WTC11 (cell line): ENCODE measurements at regions of chr13 and their contacts with region 1.

Region 1: DNA sequence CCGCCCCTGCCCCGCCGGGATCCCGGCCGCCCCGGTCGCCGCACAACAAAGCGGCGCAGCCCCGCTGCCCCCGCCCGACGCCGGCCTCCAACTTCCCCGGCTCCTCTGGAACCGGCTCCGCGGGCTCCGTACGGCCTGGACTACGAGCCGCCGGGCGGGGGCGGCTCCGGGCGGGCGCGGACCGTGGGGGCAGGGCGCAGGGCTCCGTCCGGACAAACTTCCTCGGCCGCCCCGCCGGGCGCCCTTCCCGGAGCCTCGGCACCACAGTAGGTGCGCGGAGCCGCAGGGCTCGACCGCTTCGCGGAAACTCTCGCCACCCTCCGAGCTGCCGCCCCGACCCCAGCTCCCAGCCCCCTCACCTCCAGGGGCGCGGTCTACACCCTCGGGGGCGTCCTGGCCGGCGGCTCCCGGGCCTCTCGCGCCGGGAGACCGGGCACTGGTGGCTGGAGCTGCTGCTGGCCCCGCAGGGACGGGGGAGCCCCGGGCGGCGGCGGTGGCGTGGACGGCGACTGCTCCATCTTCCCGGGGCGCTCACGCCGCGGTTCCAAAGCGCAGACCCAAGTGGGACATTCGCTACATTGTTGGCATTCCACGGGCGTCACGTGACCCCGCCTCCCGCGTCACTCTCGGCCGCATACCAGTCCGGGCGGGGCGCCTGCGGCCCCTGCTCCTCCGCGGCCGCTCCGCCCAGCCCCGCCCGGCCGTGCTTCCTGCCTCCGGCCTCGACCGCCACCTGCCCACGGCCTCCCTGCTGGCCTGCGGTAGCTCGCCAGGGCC is at the start of gene LATS2:
- DNase-seq: peak; percentile 98
- ATAC-seq: peak; percentile 87
- H3K4me3 Mint-ChIP-seq: peak within 1 kb of the TSS; percentile 77
- H3K27ac Mint-ChIP-seq: peak within 1 kb of the TSS; percentile 94
- H3K4me1 Mint-ChIP-seq: peaks cover 43% of the 10 kb centered on the region
- H3K27me3 Mint-ChIP-seq: no peaks in the 10 kb centered on the region
- CTCF ChIP-seq: no peak
- total RNA-seq, gene LATS2: 27.5 to 31.2 TPM (median 28.9 TPM) in 3 replicates

Region 2: GRCh38 chr13:20891768-20892167 is 169.4 kb before region 1 on chr13:
- CTCF ChIA-PET with region 1: no interaction called
- POLR2A ChIA-PET with region 1: no interaction called
- DNase-seq: no peak
- ATAC-seq: no peak
- H3K4me3 Mint-ChIP-seq: no peak overlapping the region
- H3K27ac Mint-ChIP-seq: no peak overlapping the region
- H3K4me1 Mint-ChIP-seq: no peaks in the 10 kb centered on the region
- H3K27me3 Mint-ChIP-seq: no peaks in the 10 kb centered on the region
- CTCF ChIP-seq: no peak

Region 3: GRCh38 chr13:21040120-21040826 is 20.9 kb before region 1 on chr13:
- CTCF ChIA-PET with region 1: no interaction called
- POLR2A ChIA-PET with region 1: no interaction called
- DNase-seq: no peak
- ATAC-seq: peak; percentile 30; the same call in 1 of the 2 replicates
- H3K4me3 Mint-ChIP-seq: no peak overlapping the region
- H3K27ac Mint-ChIP-seq: peak overlapping the region; percentile 93
- H3K4me1 Mint-ChIP-seq: peaks cover 36% of the 10 kb centered on the region
- H3K27me3 Mint-ChIP-seq: no peaks in the 10 kb centered on the region
- CTCF ChIP-seq: no peak

Region 4: DNA sequence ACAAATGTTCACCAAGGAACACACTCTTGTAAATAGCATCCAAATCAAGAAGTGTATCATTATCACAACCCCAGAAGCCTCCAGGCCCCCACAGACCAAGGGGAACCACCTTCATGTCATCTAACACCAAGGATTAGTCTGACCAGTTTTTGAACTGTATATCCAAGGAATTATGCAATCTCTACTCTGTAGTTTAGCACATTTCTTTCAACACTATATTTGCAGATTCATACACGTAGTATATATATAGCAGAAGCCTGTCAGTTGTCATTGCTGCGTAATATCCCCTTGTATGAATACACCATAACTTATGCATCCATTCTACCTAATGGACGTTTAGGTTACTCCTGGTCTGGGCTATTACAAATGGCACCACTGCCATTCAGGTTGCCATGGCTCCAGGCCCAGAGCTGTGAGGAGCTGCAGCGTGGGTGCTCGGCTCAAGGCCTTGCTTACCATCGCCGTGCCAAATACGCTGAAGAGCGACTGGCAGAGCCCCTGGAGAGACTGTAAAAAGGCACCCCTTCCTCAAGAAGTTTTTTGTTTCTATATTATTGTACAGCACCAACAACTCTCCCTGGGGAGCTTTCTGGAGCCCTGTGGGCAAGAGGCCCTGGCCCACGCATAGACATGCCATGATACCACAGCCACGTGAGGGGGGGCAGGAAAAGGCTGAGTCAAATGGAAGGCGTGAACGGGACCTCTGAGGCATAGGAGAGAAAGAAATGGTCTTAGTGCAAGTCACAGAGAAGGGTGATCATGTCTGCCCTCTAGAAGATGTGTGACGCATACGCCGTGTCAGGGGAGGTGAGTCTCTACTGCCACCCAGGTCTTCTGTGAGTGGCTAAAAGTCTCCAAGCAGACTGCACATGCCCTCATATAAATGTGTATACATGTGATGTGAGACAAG is 10.6 kb before region 1 on chr13:
- CTCF ChIA-PET with region 1: interaction called, 3 read pairs
- POLR2A ChIA-PET with region 1: interaction called, 22 read pairs
- DNase-seq: no peak
- ATAC-seq: no peak
- H3K4me3 Mint-ChIP-seq: no peak overlapping the region
- H3K27ac Mint-ChIP-seq: peak overlapping the region; percentile 44
- H3K4me1 Mint-ChIP-seq: peaks cover 55% of the 10 kb centered on the region
- H3K27me3 Mint-ChIP-seq: no peaks in the 10 kb centered on the region
- CTCF ChIP-seq: no peak